K562 (cell line): ENCODE measurements at regions of chr7 and their contacts with region 1.

Region 1: DNA sequence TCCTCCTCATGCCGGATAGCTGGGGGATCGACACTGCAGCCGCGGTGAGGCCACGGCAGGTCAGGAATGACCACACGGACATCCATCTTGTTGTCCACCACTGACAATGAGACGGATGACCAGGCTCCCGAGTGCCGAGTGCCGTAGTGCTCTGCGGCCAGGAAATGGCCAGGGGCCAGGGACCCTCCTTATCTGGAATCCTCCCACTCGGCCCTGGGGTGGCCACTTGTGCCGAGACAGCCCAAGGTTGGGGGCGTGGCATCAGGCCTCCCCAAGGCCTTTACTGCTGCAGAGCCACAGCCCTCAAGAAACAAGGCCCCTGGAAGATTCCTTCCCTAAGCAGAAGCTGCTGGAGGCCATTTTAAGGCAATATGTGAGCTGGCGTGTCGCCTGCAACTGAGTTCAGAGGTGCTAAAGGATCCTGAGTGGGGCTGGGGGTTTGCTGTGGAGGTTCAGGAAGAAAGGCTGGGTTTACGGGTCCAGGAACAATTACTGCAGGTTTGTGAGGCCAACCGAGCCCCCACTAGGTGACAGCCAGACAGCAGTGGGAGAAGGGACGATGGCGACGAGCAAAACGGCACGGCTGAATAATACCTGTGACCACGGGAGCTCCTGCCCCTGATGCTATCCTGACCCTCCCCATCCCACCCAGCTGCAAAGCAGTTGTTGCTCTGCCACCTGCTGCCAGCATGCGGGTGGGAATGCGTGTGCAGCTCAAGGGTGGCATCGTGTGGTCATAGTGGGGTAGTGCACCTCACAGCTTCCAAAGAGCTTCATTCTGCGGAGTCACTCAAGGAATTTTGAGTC is 31.6 kb upstream of the LEP start:
- DNase-seq: peak; percentile 89 to 93 (median 92)
- ATAC-seq: peak; percentile 84
- H3K4me3 ChIP-seq: no peak overlapping the region
- H3K27ac ChIP-seq: no peak overlapping the region
- H3K4me1 ChIP-seq: peaks cover 6 to 18% of the 10 kb centered on the region in 2 experiments; a peak in 3 of 5 replicates
- H3K27me3 ChIP-seq: peaks cover 22 to 57% of the 10 kb centered on the region in 2 experiments; a peak in 4 of 5 replicates
- CTCF ChIP-seq: peak; percentile 100
- EP300 ChIP-seq: no peak
- POLR2A ChIP-seq: no peak
- RAD21 ChIP-seq: peak; percentile 99 to 100

Region 2: DNA sequence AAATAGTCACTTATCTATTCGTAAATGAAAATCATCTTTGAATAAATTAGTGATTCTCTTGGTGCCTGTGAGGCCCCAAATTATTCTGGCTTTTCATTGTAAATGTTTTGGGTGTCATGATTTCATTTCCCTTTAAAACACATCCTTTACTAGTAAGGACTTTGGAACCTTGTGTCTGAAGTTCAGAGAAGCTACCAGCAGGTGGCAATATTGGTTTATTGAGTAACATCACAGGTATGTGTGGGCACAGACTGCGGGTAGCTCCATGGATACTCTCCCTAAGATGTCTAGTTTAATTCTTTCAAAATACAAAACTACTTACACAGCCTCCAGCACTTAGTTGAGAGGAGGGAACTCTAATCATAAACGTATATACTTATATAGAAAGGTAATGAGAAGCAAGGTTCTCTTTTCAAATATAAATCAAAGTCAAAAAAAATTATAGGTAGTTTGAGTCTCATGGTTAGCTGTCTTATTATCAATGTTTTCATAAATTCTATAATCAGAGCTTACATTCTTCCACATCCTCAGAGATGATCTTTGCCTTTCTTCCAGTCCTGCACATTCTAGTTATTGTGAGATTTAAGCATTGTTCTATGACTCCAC is 1406.3 kb before region 1 on chr7:
- CTCF ChIA-PET with region 1: interaction called, 3 read pairs
- POLR2A ChIA-PET with region 1: no interaction called
- in situ Hi-C with region 1: no loop called
- intact Hi-C with region 1: loop called (anchors 10 kb)
- DNase-seq: peak; percentile 58 to 77 (median 74)
- ATAC-seq: peak; percentile 98
- H3K4me3 ChIP-seq: no peak overlapping the region
- H3K27ac ChIP-seq: no peak overlapping the region
- H3K4me1 ChIP-seq: no peaks in the 10 kb centered on the region
- H3K27me3 ChIP-seq: no peaks in the 10 kb centered on the region
- CTCF ChIP-seq: peak; percentile 61 to 81 (median 67)
- EP300 ChIP-seq: no peak
- POLR2A ChIP-seq: no peak
- RAD21 ChIP-seq: peak; percentile 77 to 85

Region 3: GRCh38 chr7:127504715-127505114 is 704.7 kb before region 1 on chr7:
- CTCF ChIA-PET with region 1: interaction called, 6 read pairs
- POLR2A ChIA-PET with region 1: no interaction called
- in situ Hi-C with region 1: no loop called
- intact Hi-C with region 1: loop called (anchors 1 kb)
- DNase-seq: peak; percentile 31 to 65 (median 50)
- ATAC-seq: peak; percentile 97
- H3K4me3 ChIP-seq: no peak overlapping the region
- H3K27ac ChIP-seq: no peak overlapping the region
- H3K4me1 ChIP-seq: no peaks in the 10 kb centered on the region
- H3K27me3 ChIP-seq: peaks cover 0 to 1% of the 10 kb centered on the region in 2 experiments; a peak in 1 of 5 replicates
- CTCF ChIP-seq: peak; percentile 79 to 90 (median 85)
- EP300 ChIP-seq: no peak
- POLR2A ChIP-seq: no peak
- RAD21 ChIP-seq: peak; percentile 43 to 68; a peak in 3 of 4 replicates

Region 4: GRCh38 chr7:127708788-127709187 is 500.6 kb before region 1 on chr7:
- CTCF ChIA-PET with region 1: interaction called, 70 read pairs
- POLR2A ChIA-PET with region 1: interaction called, 5 read pairs
- in situ Hi-C with region 1: loop called (anchors 5 kb)
- intact Hi-C with region 1: loop called (anchors 1 kb)
- DNase-seq: peak; percentile 65 to 86 (median 72)
- ATAC-seq: peak; percentile 97
- H3K4me3 ChIP-seq: no peak overlapping the region
- H3K27ac ChIP-seq: no peak overlapping the region
- H3K4me1 ChIP-seq: no peaks in the 10 kb centered on the region
- H3K27me3 ChIP-seq: no peaks in the 10 kb centered on the region
- CTCF ChIP-seq: peak; percentile 67 to 84 (median 77)
- EP300 ChIP-seq: no peak
- POLR2A ChIP-seq: no peak
- RAD21 ChIP-seq: peak; percentile 76 to 82

Region 5: DNA sequence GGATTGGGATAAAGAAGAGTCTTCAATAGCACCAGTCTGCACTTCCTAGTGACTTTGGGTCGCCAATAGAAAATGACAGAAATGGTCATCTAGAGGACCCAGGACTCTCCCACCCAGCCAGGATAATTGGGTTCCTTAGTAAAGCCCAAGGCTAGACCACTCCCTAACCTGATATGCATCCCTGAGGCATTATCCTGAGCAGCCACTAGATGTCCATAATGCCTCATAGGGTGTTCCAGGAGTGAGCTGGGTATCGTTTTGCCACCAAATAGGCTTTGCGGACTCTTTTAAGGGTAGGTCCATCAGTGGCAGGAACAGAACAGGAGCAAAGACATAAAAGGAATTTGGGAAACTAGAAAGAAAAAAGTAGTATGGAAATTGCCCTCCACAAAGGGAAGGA is 173.7 kb before region 1 on chr7:
- CTCF ChIA-PET with region 1: interaction called, 9 read pairs
- POLR2A ChIA-PET with region 1: no interaction called
- in situ Hi-C with region 1: no loop called
- intact Hi-C with region 1: loop called (anchors 1 kb)
- DNase-seq: peak; percentile 42 to 61 (median 52)
- ATAC-seq: peak; percentile 92
- H3K4me3 ChIP-seq: no peak overlapping the region
- H3K27ac ChIP-seq: no peak overlapping the region
- H3K4me1 ChIP-seq: peaks cover 0 to 7% of the 10 kb centered on the region in 2 experiments; a peak in 1 of 5 replicates
- H3K27me3 ChIP-seq: no peaks in the 10 kb centered on the region
- CTCF ChIP-seq: peak; percentile 51 to 60 (median 59); a peak in 5 of 6 replicates
- EP300 ChIP-seq: no peak
- POLR2A ChIP-seq: no peak
- RAD21 ChIP-seq: peak; percentile 20 to 57; a peak in 2 of 4 replicates